GM12878 (cell line): ENCODE measurements at regions of chr20 and their contacts with region 1.

Region 1: GRCh38 chr20:50460460-50461267 is 49.5 kb upstream of the PTPN1 start:
- DNase-seq: no peak
- ATAC-seq: peak; percentile 92
- H3K4me3 ChIP-seq: no peak overlapping the region
- H3K27ac ChIP-seq: no peak overlapping the region
- H3K4me1 ChIP-seq: peaks cover 4% of the 10 kb centered on the region
- H3K27me3 ChIP-seq: no peaks in the 10 kb centered on the region
- CTCF ChIP-seq: peak; percentile 87 to 93 (median 93)
- EP300 ChIP-seq: no peak
- POLR2A ChIP-seq: no peak
- RAD21 ChIP-seq: peak; percentile 97

Region 2: GRCh38 chr20:49982346-49983122 is 478.1 kb before region 1 on chr20 and contains the start of gene SNAI1:
- CTCF ChIA-PET with region 1: no interaction called
- POLR2A ChIA-PET with region 1: no interaction called
- RAD21 ChIA-PET with region 1: no interaction called
- SMC1A ChIA-PET with region 1: no interaction called
- in situ Hi-C with region 1: loop called (anchors 5 kb)
- intact Hi-C with region 1: no loop called
- DNase-seq: peak; percentile 32
- ATAC-seq: peak; percentile 96
- H3K4me3 ChIP-seq: peak within 1 kb of the TSS; percentile 58
- H3K27ac ChIP-seq: no peak within 1 kb of the TSS
- H3K4me1 ChIP-seq: no peaks in the 10 kb centered on the region; the same call in 1 of the 2 replicates
- H3K27me3 ChIP-seq: no peaks in the 10 kb centered on the region
- CTCF ChIP-seq: peak; percentile 40 to 51 (median 42); a peak in 5 of 6 replicates
- EP300 ChIP-seq: no peak
- POLR2A ChIP-seq: peak; percentile 97
- RAD21 ChIP-seq: no peak
- polyA plus RNA-seq, gene SNAI1: not detected

Region 3: GRCh38 chr20:50189681-50190582 is 270.7 kb before region 1 on chr20:
- CTCF ChIA-PET with region 1: interaction called, 157 read pairs
- POLR2A ChIA-PET with region 1: no interaction called
- RAD21 ChIA-PET with region 1: interaction called, 56 read pairs
- SMC1A ChIA-PET with region 1: interaction called, 60 read pairs
- in situ Hi-C with region 1: loop called (anchors 5 kb)
- intact Hi-C with region 1: loop called (anchors 1 kb)
- DNase-seq: no peak
- ATAC-seq: peak; percentile 67
- H3K4me3 ChIP-seq: peak overlapping the region; percentile 88
- H3K27ac ChIP-seq: no peak overlapping the region
- H3K4me1 ChIP-seq: peaks cover 7% of the 10 kb centered on the region
- H3K27me3 ChIP-seq: no peaks in the 10 kb centered on the region
- CTCF ChIP-seq: peak; percentile 41 to 76 (median 70)
- EP300 ChIP-seq: no peak
- POLR2A ChIP-seq: no peak
- RAD21 ChIP-seq: peak; percentile 81

Region 4: DNA sequence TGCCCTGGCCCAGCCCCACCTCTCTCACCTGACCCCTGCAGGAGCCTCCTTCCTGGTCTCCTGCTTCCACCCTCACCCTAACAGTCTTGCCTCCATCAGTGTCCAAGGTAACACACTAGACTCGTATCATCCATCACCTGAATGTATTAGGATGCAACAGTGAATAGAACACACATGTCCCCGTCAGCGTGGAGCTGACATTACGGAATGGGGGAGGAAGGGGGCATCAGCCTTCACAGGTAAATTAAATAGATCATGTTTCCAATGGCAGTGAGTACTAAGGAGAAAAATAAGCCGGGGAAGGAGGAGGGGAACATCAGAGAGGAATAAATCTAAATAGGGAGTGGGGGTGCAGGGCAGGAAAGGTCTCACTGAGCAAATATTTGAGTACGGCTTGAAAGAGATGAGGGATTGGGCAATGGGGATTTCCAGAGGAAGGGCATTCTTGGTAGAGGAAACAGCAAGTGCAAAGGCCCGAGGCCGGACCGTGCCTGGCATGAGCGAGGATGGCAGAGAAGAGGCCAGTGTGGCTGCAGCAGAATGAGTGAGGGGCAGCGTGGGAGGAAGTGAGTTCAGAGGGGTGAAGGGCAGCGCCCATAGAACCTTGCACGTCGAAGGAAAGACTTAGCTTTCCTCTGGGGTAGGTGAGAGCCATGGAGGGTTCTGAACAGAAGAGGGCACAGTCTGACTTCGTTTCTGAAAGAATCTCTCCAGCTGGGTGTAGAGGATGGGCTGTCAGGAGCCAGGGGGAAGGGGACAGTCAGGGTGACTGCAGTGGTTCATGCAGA is 60.6 kb before region 1 on chr20:
- CTCF ChIA-PET with region 1: interaction called, 3 read pairs
- POLR2A ChIA-PET with region 1: no interaction called
- RAD21 ChIA-PET with region 1: no interaction called
- SMC1A ChIA-PET with region 1: interaction called, 5 read pairs
- in situ Hi-C with region 1: no loop called
- intact Hi-C with region 1: loop called (anchors 2 kb)
- DNase-seq: no peak
- ATAC-seq: no peak; the same call in 2 of the 3 replicates
- H3K4me3 ChIP-seq: no peak overlapping the region
- H3K27ac ChIP-seq: no peak overlapping the region
- H3K4me1 ChIP-seq: no peaks in the 10 kb centered on the region
- H3K27me3 ChIP-seq: no peaks in the 10 kb centered on the region; a peak in 1 of 4 replicates
- CTCF ChIP-seq: no peak
- EP300 ChIP-seq: no peak
- POLR2A ChIP-seq: no peak
- RAD21 ChIP-seq: 0 out of 2 replicates have a peak, but pooled peaks have one; percentile 8

Region 5: GRCh38 chr20:50516180-50516934 is 55.7 kb after region 1 on chr20:
- CTCF ChIA-PET with region 1: interaction called, 10 read pairs
- POLR2A ChIA-PET with region 1: no interaction called
- RAD21 ChIA-PET with region 1: interaction called, 4 read pairs
- SMC1A ChIA-PET with region 1: interaction called, 2,799 read pairs
- in situ Hi-C with region 1: no loop called
- intact Hi-C with region 1: no loop called
- DNase-seq: peak; percentile 87
- ATAC-seq: peak; percentile 59
- H3K4me3 ChIP-seq: peak overlapping the region; percentile 100
- H3K27ac ChIP-seq: peak overlapping the region; percentile 98
- H3K4me1 ChIP-seq: peaks cover 46% of the 10 kb centered on the region
- H3K27me3 ChIP-seq: no peaks in the 10 kb centered on the region
- CTCF ChIP-seq: no peak
- EP300 ChIP-seq: peak; percentile 95 to 98
- POLR2A ChIP-seq: no peak
- RAD21 ChIP-seq: no peak

Region 6: GRCh38 chr20:50575847-50576720 is 115.4 kb after region 1 on chr20:
- CTCF ChIA-PET with region 1: interaction called, 26 read pairs
- POLR2A ChIA-PET with region 1: no interaction called
- RAD21 ChIA-PET with region 1: interaction called, 14 read pairs
- SMC1A ChIA-PET with region 1: interaction called, 2,799 read pairs
- in situ Hi-C with region 1: no loop called
- intact Hi-C with region 1: loop called (anchors 5 kb)
- DNase-seq: no peak
- ATAC-seq: peak; percentile 96
- H3K4me3 ChIP-seq: no peak overlapping the region
- H3K27ac ChIP-seq: no peak overlapping the region
- H3K4me1 ChIP-seq: peaks cover 3% of the 10 kb centered on the region
- H3K27me3 ChIP-seq: no peaks in the 10 kb centered on the region
- CTCF ChIP-seq: peak; percentile 63 to 70 (median 67)
- EP300 ChIP-seq: no peak
- POLR2A ChIP-seq: no peak
- RAD21 ChIP-seq: peak; percentile 60